Mammary epithelial cell (primary cell): ENCODE measurements at regions of chr13 and their contacts with region 1.

Region 1: GRCh38 chr13:68234274-68234673 is 1004.1 kb upstream of the PCDH9 start:
- DNase-seq: peak; percentile 5
- H3K4me3 ChIP-seq: no peak overlapping the region
- H3K27ac ChIP-seq: no peak overlapping the region
- H3K4me1 ChIP-seq: no peaks in the 10 kb centered on the region
- H3K27me3 ChIP-seq: no peaks in the 10 kb centered on the region
- CTCF ChIP-seq: peak; percentile 34 to 77

Region 2: DNA sequence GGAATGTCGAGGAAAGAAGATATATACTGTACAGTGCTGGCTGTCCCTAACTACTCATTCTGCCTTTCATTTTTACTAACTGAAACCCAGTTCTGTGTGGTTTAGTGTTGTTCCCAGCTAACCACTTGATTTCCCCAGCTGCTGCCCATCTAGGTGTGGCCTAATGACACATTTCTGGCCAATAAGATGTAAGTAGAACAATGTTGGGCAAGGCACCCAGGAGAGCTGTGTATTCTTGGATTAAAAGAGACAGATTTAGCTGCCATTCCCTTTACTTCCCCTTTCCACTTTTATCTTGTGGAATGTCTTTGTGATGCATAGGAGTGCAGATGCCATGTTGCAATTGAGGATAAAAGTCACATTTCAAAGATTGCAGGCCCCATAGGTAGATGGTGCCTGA is 975.8 kb before region 1 on chr13:
- CTCF ChIA-PET with region 1: no interaction called
- dilution Hi-C with region 1: no loop called
- in situ Hi-C with region 1: no loop called
- intact Hi-C with region 1: loop called (anchors 10 kb)
- DNase-seq: peak; percentile 1
- H3K4me3 ChIP-seq: no peak overlapping the region
- H3K27ac ChIP-seq: no peak overlapping the region
- H3K4me1 ChIP-seq: no peaks in the 10 kb centered on the region
- H3K27me3 ChIP-seq: no peaks in the 10 kb centered on the region
- CTCF ChIP-seq: no peak

Region 3: GRCh38 chr13:67736646-67737420 is 497.4 kb before region 1 on chr13:
- CTCF ChIA-PET with region 1: no interaction called
- dilution Hi-C with region 1: no loop called
- in situ Hi-C with region 1: no loop called
- intact Hi-C with region 1: loop called (anchors 10 kb)
- DNase-seq: no peak
- H3K4me3 ChIP-seq: no peak overlapping the region
- H3K27ac ChIP-seq: no peak overlapping the region
- H3K4me1 ChIP-seq: no peaks in the 10 kb centered on the region
- H3K27me3 ChIP-seq: no peaks in the 10 kb centered on the region
- CTCF ChIP-seq: peak; percentile 35 to 50

Region 4: DNA sequence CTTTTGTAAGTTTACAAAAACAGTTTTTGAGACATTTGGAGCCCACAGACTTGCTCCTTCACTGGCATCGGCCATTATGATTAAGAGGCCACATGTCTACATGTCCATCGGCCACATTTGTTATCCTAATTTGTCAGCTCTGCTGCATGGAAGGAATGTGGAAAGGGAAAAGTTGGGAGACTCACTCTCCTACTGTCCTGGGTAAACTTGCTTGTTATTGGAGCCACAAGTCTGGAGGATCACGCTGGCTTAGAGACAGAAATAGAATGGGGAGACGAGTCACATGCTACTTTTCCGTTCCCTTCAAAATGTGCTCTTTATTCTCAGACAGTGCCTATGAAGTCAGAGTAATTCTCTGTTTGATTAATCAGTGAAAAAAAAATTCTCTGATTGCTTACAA is 263.0 kb before region 1 on chr13:
- CTCF ChIA-PET with region 1: no interaction called
- dilution Hi-C with region 1: no loop called
- in situ Hi-C with region 1: loop called in 1 of 2 experiments (anchors 25 kb)
- intact Hi-C with region 1: no loop called
- DNase-seq: no peak
- H3K4me3 ChIP-seq: no peak overlapping the region
- H3K27ac ChIP-seq: no peak overlapping the region
- H3K4me1 ChIP-seq: no peaks in the 10 kb centered on the region
- H3K27me3 ChIP-seq: no peaks in the 10 kb centered on the region
- CTCF ChIP-seq: no peak

Region 5: GRCh38 chr13:68056816-68057710 is 177.2 kb before region 1 on chr13:
- CTCF ChIA-PET with region 1: no interaction called
- dilution Hi-C with region 1: no loop called
- in situ Hi-C with region 1: no loop called
- intact Hi-C with region 1: loop called (anchors 10 kb)
- DNase-seq: peak; percentile 72
- H3K4me3 ChIP-seq: no peak overlapping the region
- H3K27ac ChIP-seq: peak overlapping the region; percentile 50
- H3K4me1 ChIP-seq: peaks cover 18% of the 10 kb centered on the region
- H3K27me3 ChIP-seq: no peaks in the 10 kb centered on the region
- CTCF ChIP-seq: peak in 1 of 2 donors; percentile 3

Region 6: GRCh38 chr13:68099616-68100015 is 134.7 kb before region 1 on chr13:
- CTCF ChIA-PET with region 1: no interaction called
- dilution Hi-C with region 1: no loop called
- in situ Hi-C with region 1: no loop called
- intact Hi-C with region 1: loop called (anchors 10 kb)
- DNase-seq: peak; percentile 40
- H3K4me3 ChIP-seq: no peak overlapping the region
- H3K27ac ChIP-seq: no peak overlapping the region
- H3K4me1 ChIP-seq: peaks cover 8% of the 10 kb centered on the region
- H3K27me3 ChIP-seq: no peaks in the 10 kb centered on the region
- CTCF ChIP-seq: no peak

Region 7: GRCh38 chr13:68185444-68186141 is 48.7 kb before region 1 on chr13:
- CTCF ChIA-PET with region 1: no interaction called
- dilution Hi-C with region 1: no loop called
- in situ Hi-C with region 1: no loop called
- intact Hi-C with region 1: no loop called
- DNase-seq: no peak
- H3K4me3 ChIP-seq: no peak overlapping the region
- H3K27ac ChIP-seq: no peak overlapping the region
- H3K4me1 ChIP-seq: peaks cover 2% of the 10 kb centered on the region
- H3K27me3 ChIP-seq: no peaks in the 10 kb centered on the region
- CTCF ChIP-seq: no peak